ENCODE measurements at regions of chr2 and their contacts with region 1.

Region 1: GRCh38 chr2:85678794-85679672 is 11.0 kb upstream of the SFTPB start:
- DNase-seq: peak; percentile 84
- ATAC-seq: peak; percentile 88
- H3K4me3 Mint-ChIP-seq: no peak overlapping the region
- H3K27ac Mint-ChIP-seq: peak overlapping the region; percentile 34
- H3K4me1 Mint-ChIP-seq: peaks cover 32% of the 10 kb centered on the region
- H3K27me3 Mint-ChIP-seq: peaks cover 12% of the 10 kb centered on the region

Region 2: DNA sequence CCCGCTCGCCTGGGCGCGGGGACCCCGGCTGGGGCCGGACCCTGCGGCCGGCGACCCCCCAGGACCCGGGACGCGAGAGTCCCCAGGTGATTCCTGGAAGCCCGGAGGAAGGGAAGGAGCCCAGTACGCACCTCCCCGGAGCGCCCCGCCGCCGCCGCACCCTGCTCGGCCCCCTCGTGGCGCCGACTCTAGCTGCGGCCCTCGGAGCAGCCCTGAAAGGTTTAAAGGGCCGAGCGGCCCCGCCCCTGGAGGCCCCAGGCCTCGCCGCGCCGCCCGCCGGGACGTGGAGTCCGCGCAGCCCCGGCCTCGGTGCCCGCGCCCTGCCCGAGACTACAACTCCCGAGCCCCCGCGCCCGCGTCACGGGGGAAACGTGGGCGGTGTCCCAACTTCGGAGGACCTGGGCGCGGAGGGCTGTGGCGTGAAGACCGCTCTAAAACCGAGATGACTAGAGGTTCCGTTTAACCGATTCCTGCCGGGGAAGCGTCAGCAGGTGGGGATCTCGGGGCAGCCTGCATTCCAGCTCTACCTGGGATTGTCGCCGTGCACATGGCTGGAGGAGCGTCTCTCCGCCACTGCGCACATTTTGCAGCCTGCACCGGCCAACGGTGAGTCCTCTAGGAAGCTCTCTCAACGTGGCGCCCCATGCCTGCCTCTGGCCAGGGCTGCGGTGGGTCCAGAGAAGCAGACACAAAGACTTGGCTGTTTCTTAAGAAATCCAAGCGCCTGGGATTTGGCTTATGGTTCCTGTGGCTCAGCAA is 76.4 kb before region 1 on chr2 and contains the start of gene TMEM150A:
- CTCF ChIA-PET with region 1: no interaction called
- DNase-seq: peak; percentile 88
- ATAC-seq: peak; percentile 97
- H3K4me3 Mint-ChIP-seq: peak within 1 kb of the TSS; percentile 77
- H3K27ac Mint-ChIP-seq: no peak within 1 kb of the TSS
- H3K4me1 Mint-ChIP-seq: peaks cover 20% of the 10 kb centered on the region
- H3K27me3 Mint-ChIP-seq: peaks cover 2% of the 10 kb centered on the region
- total RNA-seq, gene TMEM150A: 0.91 to 1.7 TPM

Region 3: GRCh38 chr2:85694052-85695025 is 15.3 kb after region 1 on chr2 and contains the start of gene GNLY:
- CTCF ChIA-PET with region 1: interaction called, 22 read pairs
- DNase-seq: peak; percentile 50
- ATAC-seq: peak; percentile 24
- H3K4me3 Mint-ChIP-seq: peak within 1 kb of the TSS; percentile 49
- H3K27ac Mint-ChIP-seq: peak within 1 kb of the TSS; percentile 69
- H3K4me1 Mint-ChIP-seq: peaks cover 44% of the 10 kb centered on the region
- H3K27me3 Mint-ChIP-seq: peaks cover 7% of the 10 kb centered on the region
- total RNA-seq, gene GNLY: 364 to 1,915 TPM

Region 4: GRCh38 chr2:85712849-85713602 is 34.0 kb after region 1 on chr2:
- CTCF ChIA-PET with region 1: interaction called, 189 read pairs
- DNase-seq: no peak
- ATAC-seq: no peak
- H3K4me3 Mint-ChIP-seq: no peak overlapping the region
- H3K27ac Mint-ChIP-seq: no peak overlapping the region
- H3K4me1 Mint-ChIP-seq: peaks cover 36% of the 10 kb centered on the region
- H3K27me3 Mint-ChIP-seq: peaks cover 26% of the 10 kb centered on the region

Measured in activated CD8-positive, alpha-beta memory T cell treated with anti-CD3 and anti-CD28 coated beads, Interleukin-2, amount 10 ng/mL, durations not matched to agents 7 days and 5 days (primary cell).